Heart right ventricle (tissue), 16 donors: ENCODE measurements at regions of chr12 and their contacts with region 1.

Region 1: DNA sequence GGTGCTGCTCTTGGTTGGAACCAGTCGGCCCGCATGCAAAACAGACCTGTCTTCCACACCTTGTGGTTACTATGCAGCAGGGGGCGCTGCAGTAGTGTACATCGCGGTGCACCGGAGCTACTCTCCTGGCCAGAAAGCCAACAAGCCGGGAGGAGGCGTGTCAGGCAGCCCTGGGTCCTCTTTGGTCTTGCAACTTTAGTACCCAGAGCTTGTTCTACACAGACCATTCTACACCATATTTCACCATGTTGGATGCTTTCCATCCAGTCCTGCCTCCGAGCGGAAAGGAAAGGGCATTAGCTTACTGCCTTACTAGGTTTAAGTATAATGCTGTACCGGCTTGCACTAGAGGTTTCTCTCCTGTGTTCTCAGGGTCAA is 927 bp upstream of the TMTC2 start:
- DNase-seq: peak; percentile 92 to 93
- ATAC-seq: peak; percentile 84 to 94 (median 89)
- H3K4me3 ChIP-seq: peak overlapping the region; percentile 57 to 95 (median 88)
- H3K27ac ChIP-seq: peak overlapping the region in 9 of 10 donors; percentile 78 to 96 (median 94)
- H3K4me1 ChIP-seq: peaks cover 0 to 15% (median 9%) of the 10 kb centered on the region in 9 donors
- H3K27me3 ChIP-seq: peaks cover 0 to 4% (median 0%) of the 10 kb centered on the region in 7 donors
- CTCF ChIP-seq: peak; percentile 77 to 95 (median 92)

Region 2: DNA sequence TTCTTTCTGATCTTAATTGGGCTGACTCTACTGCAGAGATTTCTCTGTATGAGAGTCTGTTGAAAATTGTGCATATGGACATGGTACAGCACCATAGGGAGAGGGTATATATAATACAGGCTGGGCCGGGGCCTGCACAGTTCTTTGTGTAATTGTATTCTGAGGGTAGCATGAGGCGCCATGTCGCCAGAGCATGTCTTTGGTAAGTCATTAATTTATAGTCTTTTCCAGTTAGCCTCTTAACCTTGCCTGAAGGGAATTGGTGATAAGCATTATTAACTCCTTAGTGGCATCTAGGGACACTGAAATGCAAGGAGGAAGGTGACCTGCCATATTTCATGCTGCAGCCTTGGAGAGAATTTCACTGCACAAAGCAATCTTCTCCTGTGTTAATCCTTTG is 570.8 kb after region 1 on chr12:
- intact Hi-C with region 1: loop called in 1 of 10 experiments (anchors 5 kb)
- DNase-seq: no peak
- ATAC-seq: no peak
- H3K4me3 ChIP-seq: no peak overlapping the region
- H3K27ac ChIP-seq: no peak overlapping the region
- H3K4me1 ChIP-seq: no peaks in the 10 kb centered on the region
- H3K27me3 ChIP-seq: no peaks in the 10 kb centered on the region
- CTCF ChIP-seq: no peak

Region 3: DNA sequence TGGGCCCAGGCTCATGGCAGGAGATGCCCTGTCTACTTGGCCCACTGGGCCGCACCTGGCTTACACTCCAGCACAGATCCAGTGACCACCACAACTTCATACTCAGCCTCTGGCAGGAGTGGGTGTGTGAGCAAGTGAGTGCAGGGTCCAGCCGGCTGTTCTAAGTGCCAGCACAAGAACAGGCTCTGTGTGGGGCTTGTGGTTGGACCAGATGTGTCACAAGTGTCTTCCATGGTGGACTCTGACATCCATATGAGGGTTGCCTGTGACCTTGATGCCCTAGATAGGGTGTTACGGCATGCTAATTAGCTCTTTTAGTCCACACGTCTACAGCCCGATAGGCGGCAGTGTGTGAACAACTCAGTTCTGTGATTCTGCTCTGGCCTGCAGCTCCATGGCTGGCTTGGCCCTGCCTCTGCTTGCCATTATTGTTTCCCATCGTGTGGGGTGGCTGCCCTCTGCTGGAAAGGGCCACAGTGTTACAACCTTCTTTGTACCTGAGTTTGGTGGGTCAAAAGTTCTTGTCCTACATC is 1137.7 kb after region 1 on chr12:
- intact Hi-C with region 1: loop called in 7 of 10 experiments (anchors 5 to 10 kb)
- DNase-seq: peak; percentile 13 to 43
- ATAC-seq: peak in 6 of 8 donors; percentile 57 to 82 (median 63)
- H3K4me3 ChIP-seq: no peak overlapping the region
- H3K27ac ChIP-seq: no peak overlapping the region
- H3K4me1 ChIP-seq: no peaks in the 10 kb centered on the region
- H3K27me3 ChIP-seq: no peaks in the 10 kb centered on the region
- CTCF ChIP-seq: peak in 8 of 9 donors; percentile 15 to 58 (median 46)

Region 4: DNA sequence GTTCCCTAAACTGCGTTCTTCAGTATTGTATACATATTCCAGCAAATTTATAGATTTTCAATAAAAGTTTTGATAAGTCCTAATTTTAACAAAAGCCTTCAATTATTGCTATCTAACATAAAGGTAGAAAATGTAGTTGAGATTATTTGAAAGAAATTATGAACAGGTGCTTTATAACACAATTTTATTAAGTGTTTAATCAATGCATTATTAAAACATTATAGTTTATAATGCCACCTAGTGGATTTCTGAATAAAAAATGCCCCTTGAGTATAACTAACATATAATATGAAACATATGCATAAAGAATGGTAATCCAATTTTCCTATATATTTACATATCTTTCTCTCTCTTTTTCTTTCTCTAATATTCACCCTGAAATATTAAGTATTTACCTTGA is 1711.5 kb after region 1 on chr12:
- intact Hi-C with region 1: loop called in 2 of 10 experiments (anchors 10 kb)
- DNase-seq: no peak
- ATAC-seq: no peak
- H3K4me3 ChIP-seq: no peak overlapping the region
- H3K27ac ChIP-seq: no peak overlapping the region
- H3K4me1 ChIP-seq: no peaks in the 10 kb centered on the region
- H3K27me3 ChIP-seq: no peaks in the 10 kb centered on the region
- CTCF ChIP-seq: peak in 5 of 9 donors; percentile 17 to 44 (median 24)

Region 5: DNA sequence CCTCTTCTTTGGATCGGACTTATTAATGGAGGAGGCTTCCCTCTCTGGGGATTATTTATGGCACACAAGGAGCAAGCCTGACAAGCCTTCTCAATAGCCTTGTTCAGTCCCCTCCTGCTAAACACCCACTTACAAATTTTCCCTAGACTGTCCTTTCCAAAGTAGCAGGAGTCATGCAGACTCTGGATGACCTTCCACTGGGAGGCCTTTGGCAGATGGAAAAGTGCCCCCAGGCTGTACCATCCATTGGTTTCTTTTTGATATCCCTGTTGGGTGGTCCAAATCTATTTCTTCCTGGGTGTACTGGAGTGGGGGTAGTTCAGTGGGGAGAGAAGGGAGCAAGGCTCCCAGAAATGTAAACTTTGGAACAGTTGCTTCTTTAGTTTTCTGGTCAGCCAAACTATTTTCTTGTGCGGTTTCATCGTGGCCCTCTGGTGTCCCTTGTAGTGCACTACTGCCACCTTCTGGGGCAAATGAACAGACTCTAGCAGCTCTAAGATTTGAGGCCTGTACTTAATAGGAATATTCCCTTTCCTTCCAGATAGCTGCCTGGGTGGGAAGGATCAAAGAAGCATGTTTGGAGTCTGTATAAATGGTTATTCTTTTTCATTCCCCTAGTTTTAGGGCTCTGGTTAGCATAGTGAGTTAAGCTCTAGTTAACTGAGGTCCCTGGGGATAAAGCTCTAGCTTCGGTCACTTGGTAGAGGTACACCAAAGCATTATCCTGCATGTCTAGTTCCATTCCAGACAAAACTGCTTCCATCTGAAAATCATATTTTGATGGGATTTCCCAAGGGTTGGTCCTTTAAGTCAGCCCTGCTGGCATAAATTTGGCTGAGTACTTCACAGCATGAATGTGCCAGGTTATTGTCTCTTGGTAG is 1817.4 kb after region 1 on chr12:
- intact Hi-C with region 1: loop called in 2 of 10 experiments (anchors 10 kb)
- DNase-seq: peak in 1 of 2 donors; percentile 33
- ATAC-seq: peak in 3 of 8 donors; percentile 16 to 60 (median 49)
- H3K4me3 ChIP-seq: no peak overlapping the region
- H3K27ac ChIP-seq: no peak overlapping the region
- H3K4me1 ChIP-seq: peaks cover 0 to 18% (median 0%) of the 10 kb centered on the region in 9 donors
- H3K27me3 ChIP-seq: no peaks in the 10 kb centered on the region
- CTCF ChIP-seq: peak in 8 of 9 donors; percentile 28 to 60 (median 50)